ENCODE measurements at regions of chr9 and their contacts with region 1.

Region 1: DNA sequence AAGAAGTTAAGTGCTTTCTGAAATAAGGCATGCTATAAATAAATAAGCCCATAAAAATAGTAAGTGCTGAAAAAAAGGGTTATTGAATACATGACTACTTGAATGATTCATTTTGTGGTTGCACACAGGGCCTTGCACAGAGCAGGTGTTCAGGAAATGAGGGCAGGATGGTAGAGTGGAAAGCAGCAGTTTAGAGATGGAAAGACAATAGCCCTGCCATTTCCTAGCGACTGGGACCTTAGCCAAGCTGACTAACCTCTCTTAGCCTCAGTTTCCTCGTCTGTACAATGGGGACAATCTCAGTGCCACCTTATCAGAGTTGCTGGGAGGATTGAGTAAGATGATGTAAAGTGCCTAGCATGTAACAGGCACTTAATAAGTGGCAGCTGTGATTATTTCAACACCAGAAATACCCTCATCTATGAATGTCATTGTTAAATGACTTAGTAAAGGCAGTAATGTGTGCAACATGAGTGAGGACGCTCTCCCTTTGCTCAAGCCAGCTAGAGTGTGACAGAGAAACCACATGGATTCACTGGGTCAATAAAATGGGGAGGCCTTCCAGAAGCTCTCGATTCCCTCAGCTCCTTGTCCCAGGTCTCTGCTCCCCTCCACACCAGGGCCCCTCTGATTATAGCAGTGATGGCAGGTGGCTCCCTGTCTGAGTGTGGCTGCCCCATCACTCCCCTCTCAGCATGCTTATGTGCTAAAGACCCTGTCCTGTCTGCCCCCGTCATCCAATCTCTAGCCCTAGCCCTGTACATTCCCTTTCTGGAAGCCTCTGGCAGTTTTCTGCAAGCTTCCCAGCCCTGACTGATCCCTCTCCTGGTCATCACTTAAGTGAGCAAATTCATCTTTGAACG is 16.0 kb upstream of the PHF19 start:
- DNase-seq: peak; percentile 81
- H3K4me3 Mint-ChIP-seq: peak overlapping the region; percentile 62
- H3K27ac Mint-ChIP-seq: peak overlapping the region; percentile 95
- H3K4me1 Mint-ChIP-seq: peaks cover 84% of the 10 kb centered on the region
- H3K27me3 Mint-ChIP-seq: no peaks in the 10 kb centered on the region

Region 2: DNA sequence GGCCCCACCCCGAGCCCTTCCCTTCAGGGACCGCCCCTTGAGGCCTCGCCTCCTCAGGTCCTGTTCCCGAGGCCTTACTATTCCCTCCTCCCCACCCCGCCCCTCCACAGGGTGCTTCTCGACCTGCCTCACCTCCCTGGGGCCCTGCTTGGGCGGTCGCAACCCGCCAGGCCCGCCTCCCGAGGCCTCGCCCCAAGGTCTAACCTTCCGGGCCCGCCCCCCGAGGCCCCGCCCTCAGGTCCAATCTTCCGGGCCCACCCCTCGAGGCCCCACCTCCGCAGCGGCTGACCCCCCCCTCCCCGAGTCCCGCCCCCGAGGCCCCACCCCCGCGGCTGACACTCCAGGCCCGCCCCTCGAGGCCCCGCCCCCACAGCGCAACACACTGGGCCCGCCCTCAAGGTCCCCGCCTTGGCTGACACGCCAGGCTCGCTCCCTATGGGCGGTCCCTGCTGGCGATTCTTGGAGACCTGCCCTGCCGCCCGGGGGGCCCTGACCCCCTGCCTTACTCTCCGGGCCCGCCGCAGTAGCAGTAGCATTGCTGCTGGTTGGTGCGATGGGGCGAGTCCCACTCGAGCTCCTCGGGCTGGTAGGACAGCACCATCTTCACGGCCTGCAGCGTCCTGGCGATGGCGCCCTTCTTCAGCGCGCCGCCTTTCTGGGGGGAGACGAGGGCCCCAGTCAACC is 24.2 kb before region 1 on chr9:
- CTCF ChIA-PET with region 1: interaction called, 14 read pairs
- POLR2A ChIA-PET with region 1: interaction called, 8 read pairs
- intact Hi-C with region 1: no loop called
- DNase-seq: peak; percentile 97
- H3K4me3 Mint-ChIP-seq: peak overlapping the region; percentile 80
- H3K27ac Mint-ChIP-seq: peak overlapping the region; percentile 87
- H3K4me1 Mint-ChIP-seq: peaks cover 46% of the 10 kb centered on the region
- H3K27me3 Mint-ChIP-seq: no peaks in the 10 kb centered on the region

Region 3: DNA sequence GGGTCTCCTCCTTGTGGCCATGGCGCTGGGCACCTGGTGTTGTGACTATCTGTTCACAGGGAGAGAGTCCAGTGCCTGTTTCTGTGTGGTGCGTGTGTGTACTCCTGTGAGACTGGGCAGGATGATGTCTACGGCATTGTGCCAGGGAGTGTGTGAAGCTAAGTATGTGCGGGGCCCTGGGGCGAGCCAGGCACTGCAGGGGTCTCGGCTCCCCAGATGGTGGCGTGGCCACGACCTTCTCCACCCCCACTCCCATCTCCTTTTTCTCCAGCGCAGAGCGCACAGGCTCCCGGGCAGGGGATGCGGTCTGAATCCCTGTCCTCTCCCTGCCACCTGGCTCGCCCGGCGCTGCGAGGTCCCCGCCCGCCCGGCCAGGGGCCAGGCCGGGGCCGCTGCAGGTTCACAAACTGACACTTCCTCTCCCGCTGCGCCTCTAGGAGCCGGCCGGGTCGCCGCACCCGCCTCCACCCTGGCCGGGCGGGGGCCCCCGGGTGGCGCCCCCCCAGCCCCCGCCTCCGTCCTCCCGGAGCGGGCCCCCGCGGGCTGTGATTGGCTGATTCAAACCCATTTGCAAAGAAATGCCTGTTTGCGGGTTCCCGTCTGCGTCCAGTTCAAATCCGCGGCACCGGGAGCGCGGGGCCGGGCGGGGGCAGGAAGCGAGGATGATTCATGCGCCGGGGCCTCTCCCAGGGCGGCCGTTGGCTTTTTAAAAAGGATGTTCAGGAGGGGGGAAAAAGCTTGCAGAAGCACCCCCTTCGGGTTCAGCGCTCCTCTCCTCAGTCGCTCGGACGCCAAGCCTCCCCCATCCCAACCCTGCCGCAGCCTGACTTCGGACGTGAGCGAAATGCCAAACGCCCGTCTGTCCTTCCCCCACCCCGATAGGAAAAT is 16.8 kb before region 1 on chr9:
- CTCF ChIA-PET with region 1: interaction called, 21 read pairs
- POLR2A ChIA-PET with region 1: interaction called, 31 read pairs
- intact Hi-C with region 1: loop called (anchors 1 kb)
- DNase-seq: peak; percentile 96
- H3K4me3 Mint-ChIP-seq: peak overlapping the region; percentile 92
- H3K27ac Mint-ChIP-seq: peak overlapping the region; percentile 98
- H3K4me1 Mint-ChIP-seq: peaks cover 79% of the 10 kb centered on the region
- H3K27me3 Mint-ChIP-seq: no peaks in the 10 kb centered on the region

Region 4: GRCh38 chr9:120904061-120904977 is 11.3 kb after region 1 on chr9:
- CTCF ChIA-PET with region 1: interaction called, 4 read pairs
- POLR2A ChIA-PET with region 1: interaction called, 29 read pairs
- intact Hi-C with region 1: no loop called
- DNase-seq: peak; percentile 68
- H3K4me3 Mint-ChIP-seq: peak overlapping the region; percentile 20
- H3K27ac Mint-ChIP-seq: peak overlapping the region; percentile 91
- H3K4me1 Mint-ChIP-seq: peaks cover 85% of the 10 kb centered on the region
- H3K27me3 Mint-ChIP-seq: no peaks in the 10 kb centered on the region

Region 5: DNA sequence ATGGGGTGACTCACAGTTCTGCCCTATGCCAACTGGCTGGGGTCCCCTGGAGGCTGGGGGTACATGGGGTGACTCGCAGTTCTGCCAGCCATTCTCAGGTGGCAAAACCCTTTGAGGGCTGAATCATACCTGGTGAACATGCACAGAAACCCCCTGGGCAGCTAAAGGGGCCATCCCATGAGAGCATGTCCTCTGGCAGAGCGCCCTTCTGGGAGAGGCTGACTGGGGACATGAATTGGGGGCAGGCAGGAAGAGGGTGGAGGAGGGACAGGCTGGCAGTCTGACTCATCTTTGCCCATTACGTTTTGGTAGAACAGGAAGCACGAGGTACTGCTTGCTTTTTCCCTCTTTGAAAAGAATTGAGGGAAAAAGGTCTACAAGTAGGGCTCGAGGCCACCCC is 16.9 kb after region 1 on chr9:
- CTCF ChIA-PET with region 1: interaction called, 4 read pairs
- POLR2A ChIA-PET with region 1: interaction called, 7 read pairs
- intact Hi-C with region 1: loop called (anchors 1 kb)
- DNase-seq: peak; percentile 78
- H3K4me3 Mint-ChIP-seq: peak overlapping the region; percentile 32
- H3K27ac Mint-ChIP-seq: peak overlapping the region; percentile 94
- H3K4me1 Mint-ChIP-seq: peaks cover 91% of the 10 kb centered on the region
- H3K27me3 Mint-ChIP-seq: no peaks in the 10 kb centered on the region

Measured in activated CD4-positive, alpha-beta memory T cell treated with anti-CD3 and anti-CD28 coated beads for 36 hours (primary cell).